ENCODE measurements at regions of chr12 and their contacts with region 1.

Region 1: GRCh38 chr12:49580572-49581535 is 12.9 kb upstream of the MCRS1 start:
- DNase-seq: peak; percentile 79
- CTCF ChIP-seq: peak; percentile 91

Region 2: DNA sequence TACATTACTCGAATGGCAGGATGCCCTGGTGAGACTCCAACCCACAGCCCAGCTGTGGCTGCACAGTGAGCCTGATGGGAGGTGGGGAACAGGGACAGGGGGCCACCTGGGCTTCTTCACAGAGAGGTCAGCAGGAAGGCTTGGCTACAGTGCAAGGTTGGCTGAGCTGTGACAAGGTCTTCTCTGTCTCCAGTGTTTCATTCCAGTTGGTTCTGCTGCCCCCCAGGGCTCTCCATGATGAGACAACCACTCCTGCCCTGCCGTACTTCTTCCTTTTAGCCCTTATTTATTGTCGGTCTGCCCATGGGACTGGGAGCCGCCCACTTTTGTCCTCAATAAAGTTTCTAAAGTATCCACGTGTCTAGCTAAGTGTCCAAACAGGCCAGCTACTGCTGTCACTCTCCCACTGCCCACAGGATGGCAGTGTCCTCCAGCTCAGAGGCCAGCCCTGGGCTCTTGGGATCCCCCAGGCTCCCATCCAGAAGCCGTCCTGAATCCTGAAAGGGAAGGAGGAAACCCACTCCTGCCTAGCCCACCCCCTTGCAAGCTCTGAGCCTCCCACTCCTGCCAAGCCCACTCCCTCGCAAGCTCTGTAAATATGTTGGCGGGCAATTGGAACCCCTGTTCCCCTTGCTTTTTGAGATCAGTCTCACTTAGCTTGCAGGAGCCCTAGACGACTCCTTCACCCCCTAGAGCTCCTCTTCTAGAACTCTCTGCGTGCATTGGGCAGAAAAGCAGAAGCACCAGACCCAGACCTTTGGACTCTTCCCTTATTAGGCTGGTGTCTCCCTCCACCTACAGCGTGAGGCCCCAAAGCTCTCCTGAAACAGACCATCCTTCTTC is 249.3 kb before region 1 on chr12:
- CTCF ChIA-PET with region 1: interaction called, 16 read pairs
- POLR2A ChIA-PET with region 1: no interaction called
- DNase-seq: peak; percentile 16
- CTCF ChIP-seq: peak; percentile 70

Region 3: DNA sequence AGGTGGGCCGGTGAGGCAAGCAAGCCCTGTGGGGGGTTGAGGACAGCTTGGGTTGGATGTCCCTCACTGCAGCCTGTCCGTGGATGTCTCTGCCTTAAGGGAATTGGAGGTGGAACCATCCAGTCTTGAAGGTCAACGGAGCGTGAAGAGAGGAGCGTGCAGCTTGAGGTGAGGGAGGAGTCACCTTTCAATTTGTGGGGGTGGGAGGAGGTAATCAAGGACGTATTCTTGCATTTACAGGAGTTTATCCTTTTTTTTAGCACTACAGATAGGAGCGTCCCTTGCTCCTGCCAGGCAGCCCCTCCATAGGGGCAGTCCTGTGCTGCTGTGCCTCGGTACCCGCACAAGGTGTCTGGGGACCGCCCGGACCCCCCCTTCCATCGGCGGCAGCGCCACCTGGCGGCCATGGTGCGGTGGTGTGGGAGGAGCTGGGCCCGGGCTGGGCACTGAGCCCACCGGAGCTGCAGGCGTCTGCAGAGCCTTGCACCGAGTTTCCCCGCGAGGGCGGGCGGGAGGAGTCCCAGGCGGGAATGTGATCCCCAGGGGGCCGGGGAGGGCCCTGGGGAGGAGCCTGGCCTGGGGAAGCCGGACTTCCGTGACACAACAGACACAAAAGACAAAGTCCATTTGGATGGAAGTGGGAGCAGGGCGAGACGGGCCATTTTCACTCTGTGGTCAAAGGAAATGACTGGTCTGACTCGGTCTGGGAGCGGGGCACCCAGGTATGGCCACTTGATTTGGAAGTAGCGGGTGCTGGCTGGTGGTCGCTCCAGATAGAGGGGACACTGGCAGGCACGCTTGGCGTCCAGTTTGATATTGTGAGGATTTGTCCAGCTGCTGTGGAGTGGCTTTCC is 233.2 kb before region 1 on chr12:
- CTCF ChIA-PET with region 1: interaction called, 25 read pairs
- POLR2A ChIA-PET with region 1: no interaction called
- DNase-seq: peak; percentile 90
- CTCF ChIP-seq: peak; percentile 95

Region 4: DNA sequence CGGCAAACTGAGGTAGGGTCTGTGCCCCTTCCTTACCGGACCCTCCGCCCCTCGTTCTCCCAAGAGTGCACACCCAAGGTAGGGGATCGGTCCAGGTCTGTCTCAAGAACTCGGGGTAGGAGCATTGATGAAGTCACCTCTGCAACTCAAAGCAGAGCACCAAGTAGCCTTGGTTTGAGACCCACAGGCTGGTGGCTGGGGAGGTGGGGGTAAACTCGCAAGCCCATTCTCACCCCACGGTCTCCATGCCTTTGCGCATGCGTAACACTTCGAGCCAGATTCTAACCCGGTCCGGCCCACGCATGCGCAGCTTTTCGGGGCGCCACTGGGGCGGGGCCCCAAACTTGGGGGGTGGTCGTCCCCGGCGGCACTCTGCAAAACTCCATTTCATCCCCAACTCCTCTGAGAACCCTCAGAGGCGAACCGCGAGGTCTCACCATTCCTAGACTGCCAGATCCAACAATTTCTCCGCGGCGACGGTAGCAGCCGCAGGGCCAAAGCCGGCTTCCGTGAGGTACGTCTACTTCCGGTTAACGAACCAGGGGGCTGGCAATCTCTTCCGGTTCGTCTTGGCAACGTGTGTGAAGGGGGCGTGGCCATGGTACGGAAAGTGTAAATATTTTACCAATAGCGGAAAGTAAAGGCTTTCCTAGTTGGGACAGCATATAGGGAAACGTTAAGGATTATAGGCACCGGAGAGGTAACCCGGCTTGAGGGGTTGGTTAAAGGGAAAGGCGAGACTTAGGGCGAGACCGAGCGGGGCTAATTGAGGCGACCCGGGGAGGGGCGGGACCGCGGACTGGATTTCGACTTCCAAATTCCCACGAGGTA is 13.0 kb before region 1 on chr12 and contains the start of gene MCRS1:
- CTCF ChIA-PET with region 1: interaction called, 55 read pairs
- POLR2A ChIA-PET with region 1: interaction called, 4 read pairs
- DNase-seq: peak; percentile 97
- CTCF ChIP-seq: no peak

Region 5: DNA sequence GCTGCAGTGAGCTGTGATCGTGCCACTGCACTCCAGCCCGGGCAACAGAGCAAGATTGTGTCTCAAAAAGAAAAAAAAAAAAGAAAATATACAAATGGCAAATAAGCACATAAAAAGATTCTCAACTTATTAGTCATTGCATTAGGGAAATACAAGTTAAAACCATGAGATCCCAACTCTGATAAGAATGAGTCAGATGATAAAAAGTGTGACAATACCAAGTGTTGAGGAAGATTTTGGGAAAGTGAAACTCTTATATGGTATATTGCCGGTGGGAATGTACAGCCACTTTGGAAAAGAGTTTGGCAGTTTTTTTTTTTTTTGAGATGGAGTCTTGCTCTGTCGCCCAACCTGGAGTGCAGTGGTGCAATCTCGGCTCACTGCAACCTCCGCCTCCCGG is 34.9 kb after region 1 on chr12:
- CTCF ChIA-PET with region 1: interaction called, 54 read pairs
- POLR2A ChIA-PET with region 1: no interaction called
- DNase-seq: no peak
- CTCF ChIP-seq: no peak